PC-9 (cell line): ENCODE measurements at regions of chr17 and their contacts with region 1.

Region 1: DNA sequence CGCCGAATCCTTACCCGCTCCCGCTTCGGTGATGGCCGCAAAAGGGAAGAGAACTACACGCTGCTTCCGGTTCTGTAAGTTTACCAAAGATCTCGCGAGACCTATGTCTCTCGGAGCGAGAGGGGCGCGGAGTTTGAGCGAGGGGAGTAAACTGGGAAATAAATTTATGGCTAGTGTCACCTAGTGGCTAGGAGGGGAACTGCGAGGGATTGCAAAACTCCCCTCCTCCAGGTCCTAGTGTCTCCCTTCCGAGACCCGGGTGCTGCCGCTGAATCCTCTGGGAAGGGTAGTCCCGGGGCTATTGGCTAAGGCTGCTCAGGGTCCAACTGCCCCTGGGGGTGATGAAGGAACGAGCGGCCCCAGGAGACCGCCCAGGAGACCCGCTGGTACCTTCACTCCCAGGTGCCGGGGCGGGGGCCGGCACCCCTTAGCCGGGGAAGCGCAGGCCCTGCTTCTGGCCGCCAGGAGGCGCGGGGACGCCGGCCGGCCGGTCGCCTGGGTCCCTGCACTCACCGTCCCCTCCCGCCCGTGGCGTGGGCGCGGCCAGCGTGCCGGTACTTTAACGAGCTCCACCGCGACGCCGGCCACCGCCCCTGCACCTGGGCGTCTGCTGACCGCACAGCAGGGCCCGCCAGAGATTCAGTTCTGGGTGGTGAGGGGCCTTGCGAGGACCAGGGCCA is at the start of gene RPL26:
- DNase-seq: peak; percentile 89 to 97
- H3K4me3 ChIP-seq: peak within 1 kb of the TSS; percentile 92
- H3K27ac ChIP-seq: peak within 1 kb of the TSS; percentile 94
- H3K4me1 ChIP-seq: peaks cover 33% of the 10 kb centered on the region
- H3K27me3 ChIP-seq: no peaks in the 10 kb centered on the region
- CTCF ChIP-seq: peak; percentile 92
- total RNA-seq, gene RPL26: 2,320 and 2,519 TPM in 2 replicates

Region 2: GRCh38 chr17:8189711-8190477 is 193.4 kb before region 1 on chr17 and contains the start of gene BORCS6:
- CTCF ChIA-PET with region 1: interaction called, 4 read pairs
- POLR2A ChIA-PET with region 1: interaction called, 4 read pairs
- intact Hi-C with region 1: loop called (anchors 10 kb)
- DNase-seq: peak; percentile 90 to 96
- H3K4me3 ChIP-seq: peak within 1 kb of the TSS; percentile 86
- H3K27ac ChIP-seq: no peak within 1 kb of the TSS
- H3K4me1 ChIP-seq: peaks cover 12% of the 10 kb centered on the region
- H3K27me3 ChIP-seq: no peaks in the 10 kb centered on the region
- CTCF ChIP-seq: no peak
- total RNA-seq, gene BORCS6: 6.4 and 8.0 TPM in 2 replicates

Region 3: DNA sequence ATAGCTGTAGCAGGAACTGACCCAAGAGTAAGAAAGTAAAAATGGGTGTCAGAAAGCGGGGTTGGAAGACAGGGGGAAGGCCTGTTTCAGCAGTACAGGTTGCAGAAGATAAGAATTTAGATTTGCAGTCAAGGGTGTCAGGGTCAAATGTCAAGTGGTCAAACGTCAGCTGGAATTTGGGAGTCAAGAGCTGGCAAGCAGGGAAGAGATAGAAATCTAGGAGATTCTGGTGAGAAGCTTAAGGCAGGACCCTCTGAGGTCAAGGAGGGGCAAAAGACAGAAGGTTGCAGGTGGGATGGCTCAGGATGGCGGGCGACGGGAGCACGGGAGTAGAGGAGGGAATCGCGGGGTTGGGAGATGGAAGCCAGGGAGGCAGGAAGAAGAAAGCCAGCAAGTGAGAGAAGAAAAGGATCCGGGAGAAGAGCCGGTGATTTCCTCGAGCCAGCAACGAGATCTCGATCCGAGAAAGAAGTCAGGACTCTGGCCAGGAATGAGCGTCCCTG is 88.4 kb before region 1 on chr17:
- CTCF ChIA-PET with region 1: no interaction called
- POLR2A ChIA-PET with region 1: interaction called, 12 read pairs
- intact Hi-C with region 1: loop called (anchors 5 kb)
- DNase-seq: no peak
- H3K4me3 ChIP-seq: peak overlapping the region; percentile 66; the same call in 1 of the 2 replicates
- H3K27ac ChIP-seq: no peak overlapping the region
- H3K4me1 ChIP-seq: no peaks in the 10 kb centered on the region; the same call in 1 of the 2 replicates
- H3K27me3 ChIP-seq: no peaks in the 10 kb centered on the region
- CTCF ChIP-seq: no peak

Region 4: DNA sequence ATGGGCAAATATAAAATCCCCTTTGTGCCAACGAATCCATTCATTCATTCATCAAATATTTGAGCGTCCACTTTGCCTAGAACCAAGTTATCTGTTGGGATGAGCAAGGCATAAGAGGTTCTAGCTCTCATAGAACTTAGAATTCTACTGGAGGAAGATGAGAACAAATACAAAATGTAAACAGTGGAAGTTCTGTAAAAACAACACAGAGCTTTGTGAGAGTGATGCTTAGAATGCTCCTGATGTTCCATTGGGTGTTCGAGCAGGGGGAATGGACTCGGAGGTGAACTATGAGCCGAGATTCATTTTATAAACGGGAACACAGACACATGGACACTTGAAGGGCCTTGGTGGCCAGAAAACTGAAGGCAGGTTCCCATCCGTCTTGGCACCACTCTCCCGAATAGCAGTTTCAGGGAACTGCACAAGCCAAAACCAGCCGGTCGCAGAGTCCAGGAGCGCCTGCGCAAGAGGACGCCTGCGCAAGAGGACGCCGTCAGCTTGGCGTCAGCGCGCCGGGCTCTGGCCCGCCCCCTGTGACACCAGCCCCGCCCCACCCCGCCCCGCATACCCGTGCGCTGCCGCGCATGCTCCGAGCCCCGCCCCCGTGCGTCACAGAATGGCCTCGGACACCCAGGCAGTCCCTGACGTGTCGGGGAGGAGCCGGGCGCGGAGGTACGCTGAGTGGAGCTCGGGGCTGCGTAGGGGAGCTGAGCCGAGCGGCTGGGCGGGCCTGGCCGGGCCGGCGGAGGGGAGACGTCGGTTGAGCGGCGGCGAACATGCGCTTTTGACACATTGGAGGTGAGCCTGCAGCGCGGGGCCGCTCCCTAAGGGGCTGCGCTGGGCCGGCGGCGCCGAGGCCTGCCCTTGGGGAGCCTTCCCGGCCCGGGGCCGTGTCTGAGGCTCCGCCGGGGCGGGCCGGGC is 52.2 kb after region 1 on chr17 and contains the start of gene NDEL1:
- CTCF ChIA-PET with region 1: interaction called, 13 read pairs
- POLR2A ChIA-PET with region 1: interaction called, 14 read pairs
- intact Hi-C with region 1: loop called (anchors 1 kb)
- DNase-seq: peak; percentile 86 to 99
- H3K4me3 ChIP-seq: peak within 1 kb of the TSS; percentile 84
- H3K27ac ChIP-seq: peak within 1 kb of the TSS; percentile 86
- H3K4me1 ChIP-seq: peaks cover 9% of the 10 kb centered on the region; the same call in 1 of the 2 replicates
- H3K27me3 ChIP-seq: no peaks in the 10 kb centered on the region
- CTCF ChIP-seq: no peak
- total RNA-seq, gene NDEL1: 60.8 and 78.4 TPM in 2 replicates

Region 5: GRCh38 chr17:8503368-8503767 is 120.1 kb after region 1 on chr17:
- CTCF ChIA-PET with region 1: no interaction called
- POLR2A ChIA-PET with region 1: no interaction called
- intact Hi-C with region 1: no loop called
- DNase-seq: no peak
- H3K4me3 ChIP-seq: no peak overlapping the region
- H3K27ac ChIP-seq: no peak overlapping the region
- H3K4me1 ChIP-seq: no peaks in the 10 kb centered on the region
- H3K27me3 ChIP-seq: peaks cover 5% of the 10 kb centered on the region; the same call in 1 of the 2 replicates
- CTCF ChIP-seq: no peak

Region 6: DNA sequence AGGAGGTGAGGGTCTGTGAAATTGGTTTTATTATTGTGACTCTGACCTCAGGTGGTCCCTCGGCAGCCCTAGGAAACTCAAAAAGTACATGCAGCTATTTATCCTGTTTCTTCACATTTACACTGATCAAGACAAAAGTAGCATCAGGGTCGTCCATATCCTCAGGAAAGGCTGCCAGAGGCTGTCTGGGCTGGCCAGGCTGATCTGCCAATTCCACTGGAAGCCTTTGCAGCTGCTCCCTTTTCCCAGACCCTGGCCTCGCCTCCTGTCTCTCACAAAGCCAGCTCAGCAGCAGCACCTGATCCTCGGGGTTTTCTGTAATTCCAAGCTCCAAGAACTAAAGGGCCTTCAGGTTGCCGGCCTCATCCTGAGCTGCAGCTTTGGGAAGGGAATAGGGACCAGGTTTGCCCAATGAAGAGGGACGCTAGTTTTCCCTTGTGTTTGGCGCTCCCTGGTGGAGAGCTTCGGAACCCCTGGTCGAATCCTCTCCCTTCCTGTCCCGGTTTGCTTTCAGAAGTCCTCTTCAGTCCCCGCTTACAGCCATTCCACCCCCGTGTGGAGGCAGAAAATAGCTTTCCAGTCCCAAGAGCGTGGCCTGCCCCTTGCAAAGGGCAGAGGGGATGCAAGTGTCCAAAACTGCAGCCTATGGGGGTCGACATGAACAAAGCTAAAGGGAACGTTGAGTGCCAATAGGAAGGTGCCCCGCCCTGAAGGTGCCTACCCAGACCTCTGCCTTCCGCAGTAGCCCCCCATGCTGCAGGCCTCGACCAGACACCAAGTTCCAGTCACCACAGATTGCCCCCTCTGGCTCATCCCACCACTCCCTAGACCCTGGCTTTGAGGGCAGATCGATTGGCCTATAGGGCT is 402.5 kb after region 1 on chr17:
- CTCF ChIA-PET with region 1: no interaction called
- POLR2A ChIA-PET with region 1: no interaction called
- intact Hi-C with region 1: loop called (anchors 1 kb)
- DNase-seq: peak in 1 of 2 experiments; percentile 70
- H3K4me3 ChIP-seq: no peak overlapping the region
- H3K27ac ChIP-seq: no peak overlapping the region
- H3K4me1 ChIP-seq: no peaks in the 10 kb centered on the region
- H3K27me3 ChIP-seq: peaks cover 37% of the 10 kb centered on the region
- CTCF ChIP-seq: peak; percentile 71

Region 7: GRCh38 chr17:8846768-8847211 is 463.5 kb after region 1 on chr17:
- CTCF ChIA-PET with region 1: no interaction called
- POLR2A ChIA-PET with region 1: no interaction called
- intact Hi-C with region 1: no loop called
- DNase-seq: no peak
- H3K4me3 ChIP-seq: no peak overlapping the region
- H3K27ac ChIP-seq: no peak overlapping the region
- H3K4me1 ChIP-seq: no peaks in the 10 kb centered on the region
- H3K27me3 ChIP-seq: peaks cover 6% of the 10 kb centered on the region
- CTCF ChIP-seq: no peak